Gastrocnemius medialis (tissue), 4 donors: ENCODE measurements at regions of chr6 and their contacts with region 1.

Region 1: DNA sequence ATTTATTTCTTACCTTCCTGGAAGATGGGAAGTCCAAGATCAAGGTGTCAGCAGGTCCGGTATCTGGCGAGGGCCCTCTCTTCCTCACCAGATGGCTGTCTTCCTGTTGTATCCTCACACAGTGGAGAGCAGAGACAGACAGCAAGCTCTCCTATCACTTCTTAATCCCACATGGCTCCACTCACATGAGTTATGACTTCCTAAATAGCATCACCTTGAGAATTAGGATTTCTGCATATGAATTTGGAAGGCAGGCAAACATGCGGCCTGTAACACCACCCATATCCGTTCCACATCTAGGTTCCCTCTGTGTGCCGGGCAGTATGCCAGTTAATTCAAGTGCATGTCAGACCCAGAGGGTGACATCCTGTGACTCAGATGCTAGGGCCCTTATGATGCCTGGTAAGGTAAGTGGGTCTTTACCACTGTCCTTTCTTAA is 2.1 kb downstream of the RAET1E start:
- DNase-seq: peak; percentile 78 to 88
- ATAC-seq: peak; percentile 64 to 79
- H3K4me3 ChIP-seq: no peak overlapping the region
- H3K27ac ChIP-seq: peak overlapping the region; percentile 77 to 86 (median 85)
- H3K4me1 ChIP-seq: peaks cover 35 to 45% of the 10 kb centered on the region in 2 donors
- H3K27me3 ChIP-seq: no peaks in the 10 kb centered on the region
- CTCF ChIP-seq: no peak
- POLR2A ChIP-seq: no peak

Region 2: GRCh38 chr6:149545754-149546528 is 349.9 kb before region 1 on chr6 and contains the start of gene PPIL4:
- in situ Hi-C with region 1: no loop called
- intact Hi-C with region 1: loop called (anchors 10 kb)
- DNase-seq: peak; percentile 92 to 95
- ATAC-seq: peak; percentile 95 to 96
- H3K4me3 ChIP-seq: peak within 1 kb of the TSS; percentile 79 to 100 (median 97)
- H3K27ac ChIP-seq: peak within 1 kb of the TSS; percentile 87 to 100 (median 98)
- H3K4me1 ChIP-seq: peaks cover 22 to 31% of the 10 kb centered on the region in 2 donors
- H3K27me3 ChIP-seq: no peaks in the 10 kb centered on the region
- CTCF ChIP-seq: peak; percentile 78 to 90 (median 83)
- POLR2A ChIP-seq: peak; percentile 83 to 88
- total RNA-seq, gene PPIL4: 14.9 to 26.2 (median 18.5) TPM

Region 3: GRCh38 chr6:149746147-149746946 is 149.5 kb before region 1 on chr6 and contains the start of gene NUP43:
- in situ Hi-C with region 1: no loop called
- intact Hi-C with region 1: loop called (anchors 5 kb)
- DNase-seq: peak; percentile 84 to 93
- ATAC-seq: peak; percentile 48 to 67
- H3K4me3 ChIP-seq: peak within 1 kb of the TSS; percentile 66 to 93 (median 72)
- H3K27ac ChIP-seq: peak within 1 kb of the TSS; percentile 74 to 86 (median 80)
- H3K4me1 ChIP-seq: peaks cover 16 to 24% of the 10 kb centered on the region in 2 donors
- H3K27me3 ChIP-seq: no peaks in the 10 kb centered on the region
- CTCF ChIP-seq: peak; percentile 70 to 82 (median 77)
- POLR2A ChIP-seq: peak in 1 of 2 donors; percentile 14
- total RNA-seq, gene NUP43: 15.0 to 42.0 (median 16.7) TPM

Region 4: DNA sequence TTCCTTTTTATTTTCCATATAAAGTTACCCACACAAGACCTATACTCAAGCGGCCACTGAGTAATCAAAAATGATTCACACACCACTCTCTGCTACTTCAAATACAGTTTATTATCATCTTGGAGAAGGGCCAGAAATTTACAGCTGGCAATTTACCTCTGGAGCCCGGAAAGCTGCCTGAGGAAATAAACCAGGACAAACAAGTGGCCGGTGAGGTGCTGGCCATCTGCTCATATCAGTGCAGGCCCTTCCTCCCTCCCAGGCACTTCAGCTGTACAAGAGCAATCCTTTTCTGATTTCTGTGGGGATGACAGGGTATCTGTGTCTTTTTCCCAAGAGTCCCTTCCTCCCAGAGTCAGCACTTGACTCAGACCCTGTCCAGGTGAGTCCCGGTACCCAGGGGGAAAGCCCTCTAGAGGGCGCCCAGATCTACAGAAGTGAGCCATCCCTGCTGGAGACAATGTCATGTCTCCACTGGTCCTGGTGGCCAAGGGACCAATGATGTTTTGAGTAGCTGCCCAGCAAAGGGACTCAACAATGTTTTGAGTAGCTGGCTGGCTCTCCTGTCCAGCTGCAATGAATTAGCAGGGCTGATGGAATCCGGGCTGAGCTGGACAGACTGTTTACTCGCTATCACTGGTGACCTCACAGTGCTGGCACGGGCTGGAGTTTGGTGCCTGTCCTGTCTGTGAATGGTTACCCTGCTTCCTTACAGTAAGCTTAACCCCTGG is 55.3 kb before region 1 on chr6:
- in situ Hi-C with region 1: loop called in 1 of 4 experiments (anchors 10 kb)
- intact Hi-C with region 1: loop called (anchors 2 kb)
- DNase-seq: peak; percentile 68 to 81
- ATAC-seq: peak; percentile 87 to 94
- H3K4me3 ChIP-seq: no peak overlapping the region
- H3K27ac ChIP-seq: peak overlapping the region in 1 of 4 donors; percentile 17
- H3K4me1 ChIP-seq: peaks cover 6 to 9% of the 10 kb centered on the region in 2 donors
- H3K27me3 ChIP-seq: no peaks in the 10 kb centered on the region
- CTCF ChIP-seq: peak; percentile 38 to 78 (median 68)
- POLR2A ChIP-seq: no peak

Region 5: DNA sequence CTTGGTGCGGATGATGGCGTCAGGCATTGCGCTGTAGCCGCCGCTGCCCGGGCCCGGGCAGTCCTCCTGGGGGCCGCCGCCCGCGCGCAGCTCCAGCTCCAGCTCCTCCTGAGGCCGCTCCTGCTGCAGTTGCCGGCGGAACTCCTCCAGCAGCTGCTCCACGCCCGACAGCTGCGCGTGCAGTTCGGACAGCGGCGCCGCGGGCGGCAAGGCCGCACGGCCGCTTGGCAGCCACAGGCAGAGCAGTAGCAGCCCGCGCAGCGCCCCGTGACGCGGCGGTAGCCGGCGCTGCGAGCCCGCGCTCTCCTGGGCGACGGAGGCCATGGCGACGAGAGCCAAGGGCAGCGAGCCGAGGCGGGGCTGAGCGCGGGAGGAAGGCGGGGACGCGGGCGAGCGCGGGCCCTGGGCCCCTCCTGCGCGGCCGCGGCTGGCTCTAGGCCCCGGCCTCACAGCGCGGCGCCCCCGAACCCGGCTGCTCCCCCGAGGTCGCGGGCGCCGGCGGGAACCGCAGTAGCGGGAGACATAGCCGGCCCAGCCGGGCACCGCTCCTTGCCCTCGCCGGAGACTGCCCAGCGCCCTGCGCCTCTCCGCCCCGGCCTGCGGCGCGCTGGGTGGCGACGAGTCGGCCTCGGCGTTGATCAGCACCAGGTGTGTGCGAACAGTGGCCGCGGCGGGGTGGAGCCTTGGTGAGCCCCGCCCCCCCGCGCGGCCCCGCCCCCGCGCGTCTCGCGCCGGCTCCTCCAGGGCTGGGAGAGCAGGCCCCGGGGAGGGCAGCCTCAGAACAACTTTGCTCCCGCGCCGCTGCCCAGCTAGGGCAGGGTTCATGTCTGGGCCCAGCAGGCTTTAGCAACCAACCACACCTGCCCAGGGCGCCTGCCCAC is 31.9 kb before region 1 on chr6 and contains the start of gene LRP11:
- in situ Hi-C with region 1: no loop called
- intact Hi-C with region 1: loop called (anchors 1 kb)
- DNase-seq: peak; percentile 77 to 84
- ATAC-seq: peak; percentile 79
- H3K4me3 ChIP-seq: peak within 1 kb of the TSS; percentile 61 to 89 (median 72)
- H3K27ac ChIP-seq: peak within 1 kb of the TSS; percentile 87 to 96 (median 94)
- H3K4me1 ChIP-seq: peaks cover 15 to 26% of the 10 kb centered on the region in 2 donors
- H3K27me3 ChIP-seq: no peaks in the 10 kb centered on the region
- CTCF ChIP-seq: peak in 1 of 5 experiments; percentile 19
- POLR2A ChIP-seq: peak; percentile 90 to 93
- total RNA-seq, gene LRP11: 5.5 to 19.8 (median 6.1) TPM

Region 6: DNA sequence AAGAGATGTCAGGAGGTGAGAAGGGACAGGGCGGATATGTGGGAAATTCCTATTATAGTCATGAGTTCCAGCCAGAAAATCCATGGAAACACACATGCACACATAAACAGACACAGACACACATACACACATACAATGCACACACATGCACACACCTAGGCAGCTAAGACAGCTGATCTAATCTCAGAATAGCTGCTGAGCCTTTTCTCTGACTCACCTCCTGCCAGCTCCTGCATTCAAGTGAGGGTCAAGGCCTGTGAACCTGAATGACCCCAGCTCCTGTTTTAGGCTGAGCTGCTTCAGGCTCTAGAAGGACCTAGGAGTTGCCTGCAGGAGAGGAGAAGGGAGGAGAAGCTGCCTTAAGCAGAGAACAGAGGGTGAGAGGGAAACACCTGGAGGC is 151.1 kb after region 1 on chr6:
- in situ Hi-C with region 1: no loop called
- intact Hi-C with region 1: no loop called
- DNase-seq: no peak
- ATAC-seq: no peak
- H3K4me3 ChIP-seq: no peak overlapping the region
- H3K27ac ChIP-seq: no peak overlapping the region
- H3K4me1 ChIP-seq: no peaks in the 10 kb centered on the region
- H3K27me3 ChIP-seq: no peaks in the 10 kb centered on the region
- CTCF ChIP-seq: no peak
- POLR2A ChIP-seq: no peak

Region 7: GRCh38 chr6:151390276-151391032 is 1494.6 kb after region 1 on chr6:
- in situ Hi-C with region 1: no loop called
- intact Hi-C with region 1: loop called (anchors 10 kb)
- DNase-seq: peak; percentile 93 to 97
- ATAC-seq: peak; percentile 78 to 81
- H3K4me3 ChIP-seq: peak overlapping the region; percentile 81 to 96 (median 91)
- H3K27ac ChIP-seq: peak overlapping the region; percentile 94 to 100 (median 99)
- H3K4me1 ChIP-seq: peaks cover 48 to 53% of the 10 kb centered on the region in 2 donors
- H3K27me3 ChIP-seq: no peaks in the 10 kb centered on the region
- CTCF ChIP-seq: no peak
- POLR2A ChIP-seq: peak; percentile 51 to 60